Gastrocnemius medialis (tissue), 4 donors: ENCODE measurements at regions of chr17 and their contacts with region 1.

Region 1: GRCh38 chr17:63773381-63774140 is at the start of gene CCDC47:
- DNase-seq: peak; percentile 99
- ATAC-seq: peak; percentile 92 to 96
- H3K4me3 ChIP-seq: peak within 1 kb of the TSS; percentile 92 to 98 (median 94)
- H3K27ac ChIP-seq: peak within 1 kb of the TSS; percentile 92 to 98 (median 98)
- H3K4me1 ChIP-seq: peaks cover 32 to 34% of the 10 kb centered on the region in 2 donors
- H3K27me3 ChIP-seq: no peaks in the 10 kb centered on the region
- CTCF ChIP-seq: peak in 1 of 5 experiments; percentile 5
- POLR2A ChIP-seq: peak; percentile 97 to 98
- total RNA-seq, gene CCDC47: 81.0 to 110 (median 86.8) TPM

Region 2: GRCh38 chr17:61927200-61928165 is 1846.1 kb before region 1 on chr17 and contains the start of gene INTS2:
- in situ Hi-C with region 1: no loop called
- intact Hi-C with region 1: loop called (anchors 10 kb)
- DNase-seq: peak; percentile 91 to 94
- ATAC-seq: peak; percentile 86 to 89
- H3K4me3 ChIP-seq: peak within 1 kb of the TSS; percentile 72 to 78 (median 74)
- H3K27ac ChIP-seq: peak within 1 kb of the TSS; percentile 80 to 83 (median 82)
- H3K4me1 ChIP-seq: peaks cover 11 to 12% of the 10 kb centered on the region in 2 donors
- H3K27me3 ChIP-seq: no peaks in the 10 kb centered on the region
- CTCF ChIP-seq: no peak
- POLR2A ChIP-seq: peak; percentile 72 to 81
- total RNA-seq, gene INTS2: 3.3 to 12.0 (median 6.1) TPM

Region 3: DNA sequence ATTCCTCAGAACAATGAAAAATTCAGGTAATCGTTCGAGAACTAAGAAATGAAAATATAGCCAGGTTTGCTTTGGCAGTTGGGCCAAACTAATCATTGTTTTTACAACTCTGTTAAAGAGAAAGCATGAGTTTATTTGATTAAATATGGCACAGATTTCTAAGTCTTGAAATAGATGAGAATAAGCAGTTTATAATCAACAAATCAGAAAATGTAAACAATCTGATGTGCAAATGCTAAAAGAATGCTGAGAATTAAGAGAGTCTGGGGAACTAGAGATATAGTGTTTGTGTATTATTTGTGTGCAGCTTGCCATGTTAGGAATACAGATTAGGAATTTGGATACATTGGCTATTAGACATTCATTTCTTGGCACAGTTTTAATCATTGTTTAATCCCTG is 595.0 kb before region 1 on chr17:
- in situ Hi-C with region 1: no loop called
- intact Hi-C with region 1: no loop called
- DNase-seq: no peak
- ATAC-seq: no peak
- H3K4me3 ChIP-seq: no peak overlapping the region
- H3K27ac ChIP-seq: no peak overlapping the region
- H3K4me1 ChIP-seq: no peaks in the 10 kb centered on the region
- H3K27me3 ChIP-seq: no peaks in the 10 kb centered on the region
- CTCF ChIP-seq: no peak
- POLR2A ChIP-seq: no peak

Region 4: GRCh38 chr17:63621766-63622519 is 151.6 kb before region 1 on chr17 and contains the start of gene MAP3K3:
- in situ Hi-C with region 1: no loop called
- intact Hi-C with region 1: loop called (anchors 2 kb)
- DNase-seq: peak; percentile 99 to 100
- ATAC-seq: peak; percentile 92 to 93
- H3K4me3 ChIP-seq: peak within 1 kb of the TSS; percentile 67 to 84 (median 74)
- H3K27ac ChIP-seq: peak within 1 kb of the TSS; percentile 85 to 90 (median 87)
- H3K4me1 ChIP-seq: peaks cover 40 to 42% of the 10 kb centered on the region in 2 donors
- H3K27me3 ChIP-seq: no peaks in the 10 kb centered on the region
- CTCF ChIP-seq: peak in 2 of 5 experiments; percentile 23 to 26
- POLR2A ChIP-seq: peak; percentile 84 to 87
- total RNA-seq, gene MAP3K3: 21.8 to 58.7 (median 29.7) TPM

Region 5: DNA sequence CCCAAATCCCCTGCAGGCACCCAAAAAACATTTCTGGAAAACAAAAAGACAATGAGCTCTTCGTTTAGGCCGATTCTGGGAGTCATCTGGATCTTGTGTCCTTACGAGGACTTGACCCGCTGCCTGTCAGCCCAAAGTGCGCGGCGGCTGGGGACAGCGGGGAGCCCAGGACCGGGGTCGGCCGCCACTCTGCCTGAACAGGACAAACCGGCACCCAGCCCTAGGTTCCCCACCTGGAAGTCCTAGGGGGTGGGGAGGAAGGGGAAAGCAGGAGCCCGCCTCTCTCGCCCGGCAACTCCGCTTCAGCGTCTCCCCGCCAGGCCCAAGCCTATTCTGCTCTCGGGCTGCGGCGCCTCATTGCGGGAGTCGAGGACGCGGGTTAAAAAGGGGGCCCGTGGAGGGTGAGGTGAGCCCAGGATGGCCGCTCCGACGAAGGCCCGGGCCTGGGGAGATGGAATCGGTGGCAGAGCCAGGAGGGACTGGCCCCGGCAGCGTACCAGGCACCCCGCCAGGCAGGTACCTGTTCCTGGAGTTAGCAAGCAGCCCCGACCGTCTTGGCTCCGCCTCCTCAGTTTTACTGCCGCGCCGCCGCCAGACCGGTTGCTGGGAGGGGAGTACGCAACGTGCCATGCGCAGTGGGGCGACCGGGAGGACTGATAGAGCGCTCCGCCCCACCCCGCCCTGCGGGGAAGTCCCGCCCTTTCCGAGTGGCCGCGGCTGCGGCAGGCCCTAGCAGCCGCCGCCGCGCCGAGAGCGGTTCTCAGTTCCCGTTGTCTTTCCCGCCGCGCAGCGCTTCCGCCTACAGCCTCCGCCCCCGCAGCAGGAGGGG is 32.1 kb before region 1 on chr17 and contains the start of gene STRADA:
- in situ Hi-C with region 1: no loop called
- intact Hi-C with region 1: loop called (anchors 1 kb)
- DNase-seq: peak; percentile 98 to 99
- ATAC-seq: peak; percentile 94 to 98
- H3K4me3 ChIP-seq: peak within 1 kb of the TSS; percentile 77 to 85 (median 82)
- H3K27ac ChIP-seq: peak within 1 kb of the TSS; percentile 86 to 92 (median 90)
- H3K4me1 ChIP-seq: peaks cover 14% of the 10 kb centered on the region in 2 donors
- H3K27me3 ChIP-seq: no peaks in the 10 kb centered on the region
- CTCF ChIP-seq: no peak
- POLR2A ChIP-seq: peak; percentile 58 to 72
- total RNA-seq, gene STRADA: 7.5 to 15.0 (median 8.6) TPM

Region 6: DNA sequence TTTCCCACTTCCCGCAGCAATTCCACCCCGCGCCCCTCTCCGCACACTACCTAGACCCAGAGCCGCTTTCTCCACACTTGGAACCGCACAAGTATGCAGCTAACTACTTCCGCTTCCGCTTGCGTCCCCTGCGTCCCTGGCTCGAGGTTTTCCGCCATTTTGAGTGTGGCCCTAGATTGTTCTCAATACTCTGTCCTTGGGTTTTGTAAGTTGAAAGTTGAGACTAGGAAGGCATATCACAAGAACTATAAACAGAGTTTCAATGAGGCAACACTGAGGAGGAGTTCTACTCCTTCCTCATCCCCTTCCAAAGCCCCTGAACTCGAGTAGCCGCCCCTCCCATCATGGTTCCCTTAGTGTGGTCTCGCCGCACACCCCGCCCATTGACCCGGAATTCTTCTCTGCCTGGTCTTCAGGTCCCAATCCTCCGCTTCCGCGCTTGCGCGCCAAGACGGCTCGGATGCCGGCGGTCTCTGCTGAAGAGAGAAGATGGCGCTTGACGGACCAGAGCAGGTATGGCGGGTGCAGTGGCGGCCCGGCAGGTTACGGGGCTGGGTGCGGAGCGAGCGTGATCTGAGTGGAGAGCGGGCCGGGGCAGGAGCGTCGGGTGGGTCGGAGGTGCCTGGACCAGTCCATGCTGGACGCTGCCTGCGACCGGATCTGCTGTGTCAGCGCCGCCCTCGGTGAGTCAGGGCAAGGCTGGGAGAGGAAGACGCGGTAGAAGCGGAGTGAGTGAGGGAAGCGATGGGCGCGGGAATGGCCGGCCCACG is 53.6 kb after region 1 on chr17 and contains the starts of genes FTSJ3 and PSMC5:
- in situ Hi-C with region 1: no loop called
- intact Hi-C with region 1: loop called (anchors 1 kb)
- DNase-seq: peak; percentile 94 to 95
- ATAC-seq: peak; percentile 96 to 97
- H3K4me3 ChIP-seq: peak within 1 kb of the TSS; percentile 84 to 89 (median 86)
- H3K27ac ChIP-seq: peak within 1 kb of the TSS; percentile 92 to 95 (median 94)
- H3K4me1 ChIP-seq: peaks cover 25 to 33% of the 10 kb centered on the region in 2 donors
- H3K27me3 ChIP-seq: no peaks in the 10 kb centered on the region
- CTCF ChIP-seq: peak in 3 of 5 experiments; percentile 23 to 53 (median 31)
- POLR2A ChIP-seq: peak; percentile 78 to 91
- total RNA-seq, gene FTSJ3: 24.6 to 46.3 (median 34.9) TPM
- total RNA-seq, gene PSMC5: 103 to 153 (median 123) TPM

Region 7: DNA sequence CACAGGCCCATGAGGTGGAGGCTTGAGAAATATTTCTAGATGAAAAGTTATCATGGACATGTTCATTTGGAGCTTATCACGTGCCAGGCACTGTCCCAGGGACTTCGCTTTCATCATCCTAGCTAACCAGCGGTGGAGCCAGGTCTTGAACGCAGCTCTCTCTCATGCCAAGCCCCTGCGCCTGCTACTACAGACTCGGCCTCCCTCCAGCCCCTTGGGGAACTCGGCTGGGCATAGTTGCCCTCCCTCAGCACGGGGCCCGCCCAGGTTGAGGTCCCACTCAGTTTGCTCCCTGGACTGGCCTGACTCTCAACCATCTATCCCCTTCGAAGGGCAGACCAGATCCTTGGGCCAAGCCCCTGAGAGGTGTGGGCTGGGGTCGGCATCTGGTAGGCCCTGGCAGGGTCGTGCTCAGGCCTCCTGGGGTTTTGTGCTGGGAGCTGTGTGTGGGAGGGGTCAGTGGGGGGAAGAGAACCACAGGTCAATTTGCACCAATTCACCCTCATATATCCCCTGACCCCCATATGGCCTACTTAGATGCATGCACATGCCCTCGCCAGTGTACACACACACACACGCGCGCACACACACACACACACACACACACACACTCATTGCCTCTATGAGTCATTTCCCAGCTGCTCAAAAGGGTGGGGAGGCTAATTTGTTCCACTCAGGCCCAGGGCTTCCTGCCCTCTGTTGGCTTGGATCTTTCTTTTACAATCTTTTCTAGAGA is 211.3 kb after region 1 on chr17:
- in situ Hi-C with region 1: no loop called
- intact Hi-C with region 1: loop called (anchors 10 kb)
- DNase-seq: peak; percentile 84 to 94
- ATAC-seq: peak; percentile 54 to 55
- H3K4me3 ChIP-seq: peak overlapping the region in 2 of 4 donors; percentile 4 to 23
- H3K27ac ChIP-seq: peak overlapping the region; percentile 98 to 100 (median 99)
- H3K4me1 ChIP-seq: peaks cover 75 to 76% of the 10 kb centered on the region in 2 donors
- H3K27me3 ChIP-seq: no peaks in the 10 kb centered on the region
- CTCF ChIP-seq: peak in 1 of 5 experiments; percentile 3
- POLR2A ChIP-seq: peak; percentile 36 to 44